Activated B cell treated with CpG ODN at 0.5 μM for 24 hours (primary cell): ENCODE measurements at regions of chr3 and their contacts with region 1.

Region 1: DNA sequence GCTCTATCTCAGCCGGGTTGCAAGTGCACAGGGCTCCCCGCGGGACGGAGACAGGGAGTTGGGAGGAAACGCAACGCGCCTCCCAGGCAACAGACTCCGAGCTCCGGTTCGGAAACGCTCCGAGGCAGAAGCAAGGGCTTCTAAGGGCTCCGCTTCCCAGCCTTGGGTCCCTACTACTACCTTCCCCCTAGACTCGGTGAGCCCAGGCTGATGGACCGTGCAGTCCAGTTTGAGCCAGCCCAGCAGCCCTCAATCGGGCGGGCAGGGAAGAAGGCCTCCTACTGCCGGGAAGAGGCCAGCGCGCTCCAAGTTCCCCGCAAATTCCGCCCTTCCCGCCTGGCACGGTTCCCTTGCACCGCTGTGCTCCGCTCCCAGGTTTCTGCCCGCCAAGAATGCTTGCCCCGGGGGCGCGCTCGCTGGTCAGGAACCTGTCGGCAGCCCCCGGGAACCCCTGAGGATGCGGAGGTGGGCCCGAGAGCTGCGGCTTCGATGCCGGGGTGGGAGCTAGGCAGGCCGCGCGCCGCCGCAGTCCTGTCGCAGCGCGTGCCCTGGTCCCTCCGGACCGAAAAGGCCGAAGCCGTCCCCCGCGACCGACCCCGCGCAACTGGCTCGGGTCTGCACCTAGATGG is 728 bp downstream of the TRANK1 start:
- DNase-seq: no peak
- ATAC-seq: peak; percentile 45
- H3K4me3 Mint-ChIP-seq: peak overlapping the region; percentile 87
- H3K27ac Mint-ChIP-seq: peak overlapping the region; percentile 68
- H3K4me1 Mint-ChIP-seq: peaks cover 26% of the 10 kb centered on the region
- H3K27me3 Mint-ChIP-seq: no peaks in the 10 kb centered on the region
- CTCF ChIP-seq: no peak

Region 2: GRCh38 chr3:36876181-36876936 is 67.8 kb before region 1 on chr3:
- CTCF ChIA-PET with region 1: no interaction called
- POLR2A ChIA-PET with region 1: interaction called, 13 read pairs
- intact Hi-C with region 1: no loop called
- DNase-seq: no peak
- ATAC-seq: peak; percentile 85
- H3K4me3 Mint-ChIP-seq: peak overlapping the region; percentile 75
- H3K27ac Mint-ChIP-seq: peak overlapping the region; percentile 96
- H3K4me1 Mint-ChIP-seq: peaks cover 55% of the 10 kb centered on the region
- H3K27me3 Mint-ChIP-seq: no peaks in the 10 kb centered on the region
- CTCF ChIP-seq: no peak

Region 3: GRCh38 chr3:36911990-36912804 is 31.9 kb before region 1 on chr3:
- CTCF ChIA-PET with region 1: interaction called, 4 read pairs
- POLR2A ChIA-PET with region 1: interaction called, 37 read pairs
- intact Hi-C with region 1: loop called (anchors 1 kb)
- DNase-seq: no peak
- ATAC-seq: peak; percentile 78
- H3K4me3 Mint-ChIP-seq: peak overlapping the region; percentile 41
- H3K27ac Mint-ChIP-seq: peak overlapping the region; percentile 93
- H3K4me1 Mint-ChIP-seq: peaks cover 69% of the 10 kb centered on the region
- H3K27me3 Mint-ChIP-seq: no peaks in the 10 kb centered on the region
- CTCF ChIP-seq: no peak

Region 4: DNA sequence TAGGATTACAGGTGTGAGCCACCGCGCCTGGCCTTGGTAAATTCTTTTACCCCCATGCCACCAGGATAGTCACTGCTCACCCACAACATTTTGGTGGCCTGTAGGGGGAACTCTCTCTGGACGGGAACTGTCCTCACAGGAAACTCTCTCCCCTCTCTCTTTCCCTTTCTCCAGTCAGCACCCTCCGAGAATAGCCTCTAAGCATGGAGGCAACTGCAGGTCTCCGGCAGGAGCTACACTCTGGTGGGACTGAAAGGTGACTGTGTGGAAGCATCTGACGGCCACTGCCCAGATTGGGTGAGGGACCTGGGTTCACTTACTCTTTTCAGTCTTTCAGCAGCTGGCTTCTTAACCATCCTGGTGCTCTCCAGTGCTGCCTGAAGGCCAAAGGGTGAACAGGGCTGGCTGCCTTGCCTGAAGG is 20.6 kb before region 1 on chr3:
- CTCF ChIA-PET with region 1: interaction called, 6 read pairs
- POLR2A ChIA-PET with region 1: interaction called, 13 read pairs
- intact Hi-C with region 1: loop called (anchors 1 kb)
- DNase-seq: no peak
- ATAC-seq: no peak
- H3K4me3 Mint-ChIP-seq: peak overlapping the region; percentile 85
- H3K27ac Mint-ChIP-seq: peak overlapping the region; percentile 87
- H3K4me1 Mint-ChIP-seq: peaks cover 60% of the 10 kb centered on the region
- H3K27me3 Mint-ChIP-seq: no peaks in the 10 kb centered on the region
- CTCF ChIP-seq: no peak

Region 5: GRCh38 chr3:36988356-36988755 is 44.2 kb after region 1 on chr3:
- CTCF ChIA-PET with region 1: no interaction called
- POLR2A ChIA-PET with region 1: interaction called, 24 read pairs
- intact Hi-C with region 1: loop called (anchors 1 kb)
- DNase-seq: no peak
- ATAC-seq: no peak
- H3K4me3 Mint-ChIP-seq: peak overlapping the region; percentile 76
- H3K27ac Mint-ChIP-seq: peak overlapping the region; percentile 65
- H3K4me1 Mint-ChIP-seq: peaks cover 37% of the 10 kb centered on the region
- H3K27me3 Mint-ChIP-seq: no peaks in the 10 kb centered on the region
- CTCF ChIP-seq: no peak